ENCODE measurements at regions of chr4 and their contacts with region 1.

Region 1: GRCh38 chr4:37826295-37827029 is at the start of gene PGM2:
- DNase-seq: peak; percentile 86 to 93 (median 89)
- ATAC-seq: peak; percentile 98
- H3K4me3 Mint-ChIP-seq: peak within 1 kb of the TSS; percentile 92 to 100 (median 98)
- H3K27ac Mint-ChIP-seq: peak within 1 kb of the TSS; percentile 95 to 99 (median 98)
- H3K4me1 Mint-ChIP-seq: peaks cover 26 to 53% (median 49%) of the 10 kb centered on the region in 4 donors
- H3K27me3 Mint-ChIP-seq: no peaks in the 10 kb centered on the region
- polyA plus RNA-seq, gene PGM2: 17.3 to 22.0 (median 17.9) TPM

Region 2: GRCh38 chr4:37780444-37781150 is 45.9 kb before region 1 on chr4:
- POLR2A ChIA-PET with region 1: no interaction called
- DNase-seq: peak; percentile 30 to 89 (median 76)
- ATAC-seq: peak; percentile 98
- H3K4me3 Mint-ChIP-seq: peak overlapping the region in 9 of 10 donors; percentile 9 to 74 (median 67)
- H3K27ac Mint-ChIP-seq: peak overlapping the region; percentile 66 to 97 (median 92)
- H3K4me1 Mint-ChIP-seq: peaks cover 9 to 42% (median 28%) of the 10 kb centered on the region in 4 donors
- H3K27me3 Mint-ChIP-seq: no peaks in the 10 kb centered on the region

Region 3: DNA sequence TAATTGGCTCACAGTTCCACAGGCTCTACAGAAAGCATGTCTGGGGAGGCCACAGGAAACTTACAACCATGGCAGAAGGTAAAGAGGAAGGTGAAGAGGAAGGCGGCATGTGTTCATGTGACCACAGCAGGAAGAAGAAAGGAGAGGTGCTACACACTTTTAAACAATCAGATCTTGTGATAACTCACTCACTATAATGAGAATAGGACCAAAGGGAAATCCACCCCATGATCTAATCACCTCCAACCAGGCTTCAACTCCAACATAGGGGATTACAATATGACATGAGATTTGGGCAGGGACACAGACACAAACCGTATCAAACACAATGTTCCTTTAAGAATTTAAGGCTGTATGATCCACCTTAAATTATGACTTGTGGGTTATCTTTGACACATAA is 10.5 kb before region 1 on chr4:
- POLR2A ChIA-PET with region 1: interaction called, 11 read pairs
- DNase-seq: peak in 3 of 10 donors; percentile 30 to 39 (median 33)
- ATAC-seq: peak; percentile 67 to 82
- H3K4me3 Mint-ChIP-seq: peak overlapping the region; percentile 40 to 87 (median 73)
- H3K27ac Mint-ChIP-seq: peak overlapping the region; percentile 63 to 91 (median 82)
- H3K4me1 Mint-ChIP-seq: peaks cover 13 to 31% (median 23%) of the 10 kb centered on the region in 4 donors
- H3K27me3 Mint-ChIP-seq: no peaks in the 10 kb centered on the region

Region 4: GRCh38 chr4:37858872-37859271 is 32.4 kb after region 1 on chr4:
- POLR2A ChIA-PET with region 1: no interaction called
- DNase-seq: no peak
- ATAC-seq: no peak
- H3K4me3 Mint-ChIP-seq: no peak overlapping the region
- H3K27ac Mint-ChIP-seq: no peak overlapping the region
- H3K4me1 Mint-ChIP-seq: no peaks in the 10 kb centered on the region
- H3K27me3 Mint-ChIP-seq: no peaks in the 10 kb centered on the region

Region 5: GRCh38 chr4:37891260-37892159 is 65.0 kb after region 1 on chr4:
- POLR2A ChIA-PET with region 1: interaction called, 17 read pairs
- DNase-seq: peak; percentile 37 to 76 (median 61)
- ATAC-seq: peak; percentile 71 to 78
- H3K4me3 Mint-ChIP-seq: peak overlapping the region; percentile 89 to 98 (median 95)
- H3K27ac Mint-ChIP-seq: peak overlapping the region; percentile 80 to 99 (median 96)
- H3K4me1 Mint-ChIP-seq: peaks cover 24 to 59% (median 47%) of the 10 kb centered on the region in 4 donors
- H3K27me3 Mint-ChIP-seq: peaks cover 0 to 1% (median 0%) of the 10 kb centered on the region in 5 donors

Region 6: DNA sequence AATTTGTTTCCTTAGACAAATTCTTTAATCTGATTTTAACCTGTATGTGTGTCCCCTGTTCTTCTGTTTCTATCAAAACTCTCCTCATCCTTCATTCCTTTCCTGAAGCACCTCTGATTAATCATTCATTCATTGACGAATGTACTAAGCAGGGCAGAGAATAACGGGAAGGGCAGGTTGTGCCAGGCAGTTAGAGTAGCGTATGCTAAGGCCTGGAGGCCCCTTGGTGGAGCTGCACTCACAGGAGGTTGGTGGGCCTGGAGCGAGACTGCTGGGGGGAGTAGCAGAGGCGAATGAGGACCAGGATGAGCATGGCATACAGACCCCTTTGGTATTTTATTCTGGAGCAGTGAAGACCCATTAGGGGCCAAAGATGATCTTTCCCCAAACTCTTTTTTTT is 156.3 kb after region 1 on chr4:
- POLR2A ChIA-PET with region 1: no interaction called
- DNase-seq: no peak
- ATAC-seq: no peak
- H3K4me3 Mint-ChIP-seq: no peak overlapping the region
- H3K27ac Mint-ChIP-seq: peak overlapping the region in 1 of 10 donors; percentile 12
- H3K4me1 Mint-ChIP-seq: peaks cover 21 to 83% (median 36%) of the 10 kb centered on the region in 4 donors
- H3K27me3 Mint-ChIP-seq: no peaks in the 10 kb centered on the region